WTC11 (cell line): ENCODE measurements at regions of chr6 and their contacts with region 1.

Region 1: DNA sequence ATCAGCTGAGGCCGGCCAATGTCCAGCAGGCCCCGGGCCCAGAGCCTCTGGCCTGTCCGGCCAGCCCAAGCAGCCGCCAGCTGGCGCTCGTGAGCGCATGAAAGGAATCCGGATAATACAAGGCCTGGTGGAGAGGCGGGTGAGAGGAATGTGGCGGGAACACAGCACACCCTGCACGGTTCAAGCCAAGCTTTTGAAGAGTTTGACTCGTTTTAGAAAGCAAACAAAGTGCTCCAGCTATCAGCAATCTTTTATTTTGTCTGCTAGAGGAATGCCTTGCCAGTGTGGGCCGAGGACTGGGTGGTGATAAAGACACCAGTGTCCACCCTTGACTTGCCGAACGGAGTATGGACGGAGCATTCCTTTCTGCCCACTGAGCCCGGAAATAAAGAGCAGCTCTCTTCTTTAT is 9.3 kb upstream of the NEDD9 start:
- DNase-seq: peak; percentile 89
- ATAC-seq: peak; percentile 100
- H3K4me3 Mint-ChIP-seq: no peak overlapping the region
- H3K27ac Mint-ChIP-seq: no peak overlapping the region
- H3K4me1 Mint-ChIP-seq: peaks cover 3% of the 10 kb centered on the region
- H3K27me3 Mint-ChIP-seq: peaks cover 17% of the 10 kb centered on the region
- CTCF ChIP-seq: peak; percentile 55

Region 2: DNA sequence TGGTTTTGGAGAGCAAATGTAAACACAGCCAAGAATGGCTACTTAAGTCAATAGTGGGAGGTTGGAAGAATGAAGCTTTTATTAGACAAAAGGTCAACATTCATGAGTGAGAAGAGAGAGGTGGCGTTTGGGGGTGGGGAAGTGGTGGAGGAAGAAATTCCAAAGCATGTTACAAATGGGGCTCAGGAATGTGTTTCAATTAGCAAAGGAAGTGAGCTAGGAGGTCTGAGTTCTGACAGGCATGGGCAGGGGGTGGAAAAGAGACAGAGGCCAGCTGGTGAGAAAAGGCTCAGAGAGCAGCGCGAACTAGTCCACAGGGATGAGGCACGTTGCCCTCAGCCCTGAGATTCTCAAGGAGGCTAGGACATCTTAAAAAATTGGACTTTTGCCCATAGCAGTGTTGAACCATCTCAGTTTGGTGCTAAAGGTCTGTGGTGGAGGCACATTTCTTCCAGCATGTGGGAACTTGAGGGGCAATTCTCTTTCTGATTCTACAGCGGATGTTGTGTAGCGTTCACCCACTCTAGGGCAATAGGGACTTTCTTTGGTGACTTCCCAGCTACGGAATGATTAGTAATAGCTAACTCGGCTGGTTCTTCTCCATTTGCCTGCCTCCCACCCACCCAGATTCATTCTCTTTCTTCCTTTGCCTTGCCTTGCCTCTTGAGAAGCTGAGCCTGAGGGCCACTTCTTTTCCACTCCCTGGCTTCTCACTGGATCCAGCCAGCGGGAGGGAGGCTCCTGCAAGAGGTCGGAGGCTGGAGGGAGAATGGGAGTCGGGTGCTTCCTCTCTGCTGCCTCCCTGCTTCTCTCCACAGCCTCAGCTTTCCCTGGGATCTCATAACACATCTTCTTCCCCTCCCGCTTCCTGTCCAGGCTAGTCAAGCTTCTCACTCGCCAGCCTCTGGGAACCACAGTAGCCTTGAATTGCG is 35.7 kb after region 1 on chr6:
- CTCF ChIA-PET with region 1: interaction called, 7 read pairs
- POLR2A ChIA-PET with region 1: interaction called, 10 read pairs
- DNase-seq: peak; percentile 36
- ATAC-seq: peak; percentile 90
- H3K4me3 Mint-ChIP-seq: no peak overlapping the region
- H3K27ac Mint-ChIP-seq: peak overlapping the region; percentile 31
- H3K4me1 Mint-ChIP-seq: peaks cover 40% of the 10 kb centered on the region
- H3K27me3 Mint-ChIP-seq: no peaks in the 10 kb centered on the region
- CTCF ChIP-seq: no peak

Region 3: DNA sequence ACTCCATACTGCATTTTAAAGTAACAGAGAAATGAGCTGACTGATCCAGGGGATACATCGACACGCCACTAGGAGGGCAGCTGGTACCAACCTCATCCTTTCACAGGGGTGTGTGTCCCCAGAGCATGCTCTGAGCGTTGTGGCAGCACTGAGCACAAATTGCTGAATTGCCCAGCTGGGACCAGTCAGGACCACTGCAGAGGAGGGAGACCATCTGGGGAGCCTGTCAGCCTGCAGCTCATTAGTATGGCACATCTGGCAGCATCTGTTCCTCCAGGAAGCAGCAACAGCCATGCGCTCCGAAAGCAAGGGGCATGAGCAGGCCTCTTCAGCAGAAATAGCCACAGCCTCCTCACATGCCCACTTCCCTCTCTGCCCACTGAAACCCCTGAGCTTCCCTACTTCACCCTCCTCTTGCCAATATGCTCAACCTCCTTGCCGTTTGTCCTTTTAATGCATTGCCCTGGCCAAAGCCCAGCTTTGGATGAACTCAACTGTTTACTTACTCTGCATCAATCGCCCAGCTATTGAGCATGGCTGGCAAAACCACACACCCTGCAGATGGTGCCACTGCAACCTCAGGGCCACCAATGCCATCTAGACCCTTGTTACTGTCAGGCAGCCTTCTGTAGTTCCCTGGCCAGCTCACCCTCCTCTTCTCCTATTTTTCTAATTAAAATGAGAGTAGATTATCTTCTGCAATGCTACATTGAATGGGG is 68.3 kb after region 1 on chr6:
- CTCF ChIA-PET with region 1: interaction called, 14 read pairs
- POLR2A ChIA-PET with region 1: no interaction called
- DNase-seq: peak; percentile 34
- ATAC-seq: peak; percentile 97
- H3K4me3 Mint-ChIP-seq: no peak overlapping the region
- H3K27ac Mint-ChIP-seq: no peak overlapping the region
- H3K4me1 Mint-ChIP-seq: no peaks in the 10 kb centered on the region
- H3K27me3 Mint-ChIP-seq: no peaks in the 10 kb centered on the region
- CTCF ChIP-seq: no peak